A549 (cell line): ENCODE measurements at regions of chr15 and their contacts with region 1.

Region 1: GRCh38 chr15:32956006-32956405 is 238.2 kb downstream of the GREM1 start:
- DNase-seq: peak; percentile 55 to 77
- ATAC-seq: peak; percentile 80 to 87; a peak in 5 of 6 replicates
- H3K4me3 ChIP-seq: no peak overlapping the region
- H3K27ac ChIP-seq: peak overlapping the region; percentile 6 to 27; a peak in 2 of 6 replicates
- H3K4me1 ChIP-seq: peaks cover 17% of the 10 kb centered on the region; the same call in 2 of the 3 replicates
- CTCF ChIP-seq: peak; percentile 84
- EP300 ChIP-seq: no peak
- POLR2A ChIP-seq: no peak
- RAD21 ChIP-seq: peak; percentile 90 to 91

Region 2: GRCh38 chr15:32683906-32684584 is 272.0 kb before region 1 on chr15:
- CTCF ChIA-PET with region 1: interaction called, 13 read pairs
- POLR2A ChIA-PET with region 1: no interaction called
- DNase-seq: peak in 1 of 2 experiments; percentile 30
- ATAC-seq: peak in 1 of 2 experiments; percentile 23; a peak in 1 of 6 replicates
- H3K4me3 ChIP-seq: no peak overlapping the region
- H3K27ac ChIP-seq: peak overlapping the region; percentile 57 to 61; a peak in 5 of 6 replicates
- H3K4me1 ChIP-seq: peaks cover 54% of the 10 kb centered on the region
- CTCF ChIP-seq: no peak
- EP300 ChIP-seq: no peak
- POLR2A ChIP-seq: no peak
- RAD21 ChIP-seq: no peak

Region 3: GRCh38 chr15:32833379-32833821 is 122.6 kb before region 1 on chr15:
- CTCF ChIA-PET with region 1: interaction called, 18 read pairs
- POLR2A ChIA-PET with region 1: no interaction called
- DNase-seq: no peak
- ATAC-seq: no peak
- H3K4me3 ChIP-seq: no peak overlapping the region
- H3K27ac ChIP-seq: peak overlapping the region in 1 of 2 experiments; percentile 20; a peak in 2 of 6 replicates
- H3K4me1 ChIP-seq: peaks cover 36% of the 10 kb centered on the region
- CTCF ChIP-seq: no peak
- EP300 ChIP-seq: no peak
- POLR2A ChIP-seq: no peak
- RAD21 ChIP-seq: no peak

Region 4: DNA sequence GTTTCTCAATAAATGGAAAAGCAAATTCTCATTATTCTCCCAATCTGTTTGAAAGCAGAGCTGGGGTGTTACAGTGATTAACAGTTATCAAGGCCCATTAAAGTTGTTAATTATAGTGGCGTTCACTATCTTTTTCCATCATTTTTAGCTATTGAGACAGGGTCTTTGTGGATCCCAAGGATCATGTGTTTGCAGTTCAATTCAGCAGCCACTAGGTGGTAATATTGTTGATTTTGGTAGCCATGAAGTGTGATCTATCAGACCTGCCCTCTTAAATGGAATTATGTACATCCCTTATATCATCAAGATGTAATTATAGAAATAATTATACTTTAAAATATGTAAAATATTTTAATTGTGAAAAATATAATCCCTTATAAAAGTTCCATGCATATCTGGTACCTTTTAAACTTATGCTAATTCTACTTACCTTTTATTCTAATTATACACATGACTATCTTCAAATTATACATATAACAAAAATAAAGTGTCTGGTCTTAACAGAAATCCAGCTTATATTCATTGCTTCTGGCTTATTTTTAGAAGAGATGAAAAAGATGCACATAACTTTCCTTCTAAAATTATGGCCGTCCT is 111.8 kb before region 1 on chr15:
- CTCF ChIA-PET with region 1: interaction called, 90 read pairs
- POLR2A ChIA-PET with region 1: no interaction called
- DNase-seq: peak; percentile 40 to 69
- ATAC-seq: peak in 1 of 2 experiments; percentile 62; a peak in 3 of 6 replicates
- H3K4me3 ChIP-seq: no peak overlapping the region
- H3K27ac ChIP-seq: peak overlapping the region in 1 of 2 experiments; percentile 41; a peak in 1 of 6 replicates
- H3K4me1 ChIP-seq: peaks cover 26% of the 10 kb centered on the region
- CTCF ChIP-seq: peak; percentile 77
- EP300 ChIP-seq: no peak
- POLR2A ChIP-seq: no peak
- RAD21 ChIP-seq: peak; percentile 73 to 78

Region 5: DNA sequence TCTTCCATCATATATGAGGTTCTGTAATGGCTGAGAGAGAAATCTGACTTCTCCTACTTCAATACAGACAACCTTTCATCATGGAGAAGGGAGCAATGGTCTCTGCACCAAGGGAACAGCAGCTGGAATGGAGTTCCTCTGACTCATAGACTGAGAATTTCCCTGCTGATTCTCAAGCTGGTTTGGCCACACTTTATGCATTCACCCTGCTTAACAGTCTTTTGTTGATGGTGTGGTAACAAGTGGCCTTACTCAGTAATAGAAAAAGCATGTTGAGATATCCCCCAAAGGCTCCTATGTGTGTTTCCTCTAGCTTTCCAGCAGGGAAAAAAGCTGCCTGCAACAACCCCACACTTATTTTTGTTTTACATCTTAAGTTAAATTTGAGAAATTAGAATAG is 100.1 kb before region 1 on chr15:
- CTCF ChIA-PET with region 1: interaction called, 25 read pairs
- POLR2A ChIA-PET with region 1: no interaction called
- DNase-seq: peak; percentile 65 to 93
- ATAC-seq: peak; percentile 93 to 96
- H3K4me3 ChIP-seq: no peak overlapping the region
- H3K27ac ChIP-seq: peak overlapping the region; percentile 79 to 86
- H3K4me1 ChIP-seq: peaks cover 61% of the 10 kb centered on the region
- CTCF ChIP-seq: no peak
- EP300 ChIP-seq: peak; percentile 63 to 65; a peak in 2 of 5 replicates
- POLR2A ChIP-seq: no peak
- RAD21 ChIP-seq: peak in 1 of 2 experiments; percentile 37; a peak in 2 of 5 replicates

Region 6: GRCh38 chr15:32942401-32942841 is 13.6 kb before region 1 on chr15:
- CTCF ChIA-PET with region 1: interaction called, 15 read pairs
- POLR2A ChIA-PET with region 1: no interaction called
- DNase-seq: no peak
- ATAC-seq: no peak
- H3K4me3 ChIP-seq: no peak overlapping the region
- H3K27ac ChIP-seq: no peak overlapping the region
- H3K4me1 ChIP-seq: no peaks in the 10 kb centered on the region
- CTCF ChIP-seq: no peak
- EP300 ChIP-seq: no peak
- POLR2A ChIP-seq: no peak
- RAD21 ChIP-seq: no peak

Region 7: DNA sequence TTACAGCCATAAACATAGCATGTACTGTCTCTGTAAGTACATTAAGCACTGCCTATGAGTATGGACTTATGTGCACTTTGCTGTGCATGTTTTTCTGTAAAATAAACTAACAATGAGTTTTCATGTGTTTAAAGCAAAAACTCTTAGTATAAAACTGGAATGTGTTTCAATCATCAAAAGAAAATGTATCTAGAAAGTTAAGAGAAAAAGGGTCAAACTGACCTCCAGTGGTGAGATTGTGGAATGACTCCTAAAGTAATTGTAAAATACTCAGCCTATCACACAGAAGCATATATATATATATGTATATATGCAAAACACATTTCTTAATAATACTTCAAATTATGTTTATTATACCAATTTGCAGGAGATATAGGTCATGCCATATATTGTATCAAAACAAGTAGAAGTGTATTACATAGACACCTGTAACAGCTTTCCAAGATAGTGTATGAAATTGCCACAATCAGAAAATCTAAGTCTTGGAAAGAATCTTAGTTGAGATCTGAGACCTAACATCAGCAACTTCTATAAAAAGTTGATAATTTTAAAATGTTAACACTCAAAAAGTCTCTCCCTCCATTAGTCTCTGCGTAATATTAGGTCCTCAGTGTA is 38.9 kb after region 1 on chr15:
- CTCF ChIA-PET with region 1: interaction called, 29 read pairs
- POLR2A ChIA-PET with region 1: no interaction called
- DNase-seq: peak; percentile 13 to 62
- ATAC-seq: peak; percentile 52 to 82; a peak in 3 of 6 replicates
- H3K4me3 ChIP-seq: no peak overlapping the region
- H3K27ac ChIP-seq: peak overlapping the region in 1 of 2 experiments; percentile 38; a peak in 3 of 6 replicates
- H3K4me1 ChIP-seq: no peaks in the 10 kb centered on the region
- CTCF ChIP-seq: peak; percentile 95
- EP300 ChIP-seq: no peak
- POLR2A ChIP-seq: no peak
- RAD21 ChIP-seq: peak; percentile 89 to 95

Region 8: DNA sequence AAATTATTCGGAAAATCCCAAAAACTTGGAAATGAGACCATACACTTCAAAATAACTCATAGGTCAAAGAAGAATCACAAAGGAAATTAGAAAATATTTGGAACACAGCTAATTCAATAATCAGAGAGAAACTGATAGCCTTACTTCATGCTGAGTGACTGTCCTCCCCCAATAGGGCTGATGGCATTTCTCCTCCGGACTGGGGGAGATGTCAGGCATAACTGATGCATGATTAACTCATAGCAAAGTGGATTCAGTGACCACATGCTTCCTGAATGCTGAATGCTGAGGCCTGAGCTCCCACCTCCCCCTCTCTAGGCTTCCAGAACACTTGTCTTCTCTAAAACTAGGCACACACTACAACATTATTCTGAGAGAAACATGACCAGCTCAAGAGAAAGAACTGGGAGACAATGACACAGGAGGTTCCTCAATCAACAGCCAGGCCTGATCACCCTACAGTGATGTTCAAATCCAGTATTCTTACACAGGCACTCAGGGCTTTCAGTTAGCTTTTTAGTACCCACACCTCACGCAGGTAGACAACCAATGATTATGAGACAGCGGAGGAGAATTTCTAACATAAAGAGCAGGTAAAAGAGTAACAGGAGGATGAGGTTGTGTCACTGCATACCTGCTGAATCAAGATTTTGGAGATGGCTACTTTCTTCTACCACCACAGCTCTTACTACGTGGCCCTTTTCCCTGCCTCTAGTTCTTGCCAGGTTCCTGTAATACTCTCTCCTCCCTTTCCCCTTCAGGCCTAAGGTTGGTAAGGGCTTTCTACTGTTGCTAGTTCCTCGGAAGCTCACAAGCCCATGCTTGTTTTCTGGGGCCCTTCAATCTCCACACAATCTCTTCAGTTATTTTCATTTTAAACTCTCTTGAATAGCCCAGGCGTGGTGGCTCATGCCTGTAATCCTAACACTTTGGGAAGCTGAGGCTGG is 142.4 kb after region 1 on chr15:
- CTCF ChIA-PET with region 1: no interaction called
- POLR2A ChIA-PET with region 1: no interaction called
- DNase-seq: no peak
- ATAC-seq: peak; percentile 34 to 61; a peak in 4 of 6 replicates
- H3K4me3 ChIP-seq: no peak overlapping the region
- H3K27ac ChIP-seq: no peak overlapping the region
- H3K4me1 ChIP-seq: no peaks in the 10 kb centered on the region
- CTCF ChIP-seq: no peak
- EP300 ChIP-seq: no peak
- POLR2A ChIP-seq: no peak
- RAD21 ChIP-seq: no peak